Colonic mucosa (tissue), 4 donors: ENCODE measurements at regions of chr6 and their contacts with region 1.

Region 1: DNA sequence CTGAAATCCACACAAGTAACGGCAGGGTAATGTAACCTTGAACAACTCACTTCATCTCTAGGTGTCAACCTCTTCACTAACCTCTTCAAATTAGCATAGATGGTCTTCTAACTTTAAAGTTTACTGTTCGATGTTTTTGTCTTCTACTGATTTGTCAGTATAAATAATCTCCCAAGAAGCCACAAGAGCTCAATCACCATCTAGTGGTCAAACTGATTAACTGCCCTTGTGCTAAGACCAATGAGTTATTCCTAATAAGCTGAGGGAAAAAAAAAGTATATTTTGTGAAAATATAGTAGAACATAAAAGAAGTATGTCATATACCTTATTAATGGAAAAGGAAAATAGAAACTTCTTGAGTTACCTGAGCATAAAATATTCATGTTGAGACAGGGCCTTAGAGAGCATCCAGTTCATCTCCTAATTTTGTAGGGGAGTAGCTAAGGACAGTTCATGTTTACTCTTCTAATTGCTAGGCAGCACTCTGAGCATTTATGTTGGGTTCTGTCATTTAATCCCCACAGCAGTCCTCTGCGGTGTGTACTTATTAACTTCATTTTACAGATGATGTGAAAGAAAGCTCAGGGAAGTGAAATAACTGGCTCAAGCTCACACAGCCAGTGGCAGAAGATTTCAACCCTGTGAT is 317.1 kb downstream of the ESR1 start:
- DNase-seq: no peak
- H3K4me3 ChIP-seq: no peak overlapping the region
- H3K27ac ChIP-seq: no peak overlapping the region
- H3K4me1 ChIP-seq: no peaks in the 10 kb centered on the region
- H3K27me3 ChIP-seq: no peaks in the 10 kb centered on the region
- CTCF ChIP-seq: peak; percentile 55

Region 2: DNA sequence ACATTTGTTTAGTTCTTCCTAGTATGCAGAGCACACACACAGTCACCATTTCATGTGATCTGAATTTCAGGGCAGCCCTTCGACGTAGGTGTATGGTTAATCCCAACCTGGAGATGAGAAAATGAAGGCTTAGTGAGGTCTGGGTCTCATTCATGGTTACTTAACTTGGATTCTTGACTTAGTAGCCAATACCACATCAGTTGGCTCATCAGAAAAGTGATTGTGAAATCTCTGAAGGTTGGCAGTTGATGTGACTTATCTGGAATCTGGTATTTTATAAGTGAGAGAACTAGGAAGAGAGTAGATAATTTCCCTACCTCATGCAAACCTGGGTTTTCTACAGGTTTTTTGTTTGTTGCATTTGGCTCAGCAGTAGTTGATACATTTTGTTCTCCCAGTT is 507.0 kb before region 1 on chr6:
- intact Hi-C with region 1: no loop called
- DNase-seq: no peak
- H3K4me3 ChIP-seq: no peak overlapping the region
- H3K27ac ChIP-seq: no peak overlapping the region
- H3K4me1 ChIP-seq: no peaks in the 10 kb centered on the region
- H3K27me3 ChIP-seq: no peaks in the 10 kb centered on the region
- CTCF ChIP-seq: no peak

Region 3: DNA sequence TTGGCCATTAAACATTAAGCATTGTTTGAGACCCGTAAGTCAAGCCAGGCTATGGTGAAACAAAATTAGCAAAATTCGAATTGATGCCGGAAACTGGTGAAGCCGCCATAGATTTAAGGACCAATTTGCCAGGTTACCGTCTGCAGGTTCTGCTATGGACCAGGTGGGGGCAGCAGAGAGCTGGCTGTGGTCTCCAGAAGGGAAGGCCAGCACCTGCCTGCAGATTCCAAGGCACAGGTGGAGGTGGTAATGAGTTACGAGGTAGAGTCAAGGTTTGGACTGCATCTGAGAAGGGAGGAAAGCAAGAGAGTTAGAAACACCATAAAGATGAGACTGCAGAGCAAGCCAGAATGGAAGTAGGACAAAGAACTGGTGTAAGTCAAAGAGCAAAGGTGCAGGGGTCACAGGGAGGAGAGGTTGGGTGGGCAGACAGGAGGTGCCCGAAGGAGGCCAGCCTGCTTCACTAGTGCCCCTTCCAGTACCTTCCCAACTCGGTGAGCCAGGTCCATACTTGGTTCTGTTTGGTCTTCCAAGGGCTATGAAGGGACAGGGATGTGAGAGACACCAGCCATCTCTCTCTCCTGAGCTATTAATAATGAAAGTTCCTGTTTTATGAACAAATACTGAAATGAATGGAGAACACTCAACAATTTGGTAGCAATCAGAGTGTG is 448.7 kb before region 1 on chr6:
- intact Hi-C with region 1: loop called (anchors 10 kb)
- DNase-seq: peak; percentile 39
- H3K4me3 ChIP-seq: no peak overlapping the region
- H3K27ac ChIP-seq: no peak overlapping the region
- H3K4me1 ChIP-seq: no peaks in the 10 kb centered on the region
- H3K27me3 ChIP-seq: no peaks in the 10 kb centered on the region
- CTCF ChIP-seq: peak; percentile 88

Region 4: DNA sequence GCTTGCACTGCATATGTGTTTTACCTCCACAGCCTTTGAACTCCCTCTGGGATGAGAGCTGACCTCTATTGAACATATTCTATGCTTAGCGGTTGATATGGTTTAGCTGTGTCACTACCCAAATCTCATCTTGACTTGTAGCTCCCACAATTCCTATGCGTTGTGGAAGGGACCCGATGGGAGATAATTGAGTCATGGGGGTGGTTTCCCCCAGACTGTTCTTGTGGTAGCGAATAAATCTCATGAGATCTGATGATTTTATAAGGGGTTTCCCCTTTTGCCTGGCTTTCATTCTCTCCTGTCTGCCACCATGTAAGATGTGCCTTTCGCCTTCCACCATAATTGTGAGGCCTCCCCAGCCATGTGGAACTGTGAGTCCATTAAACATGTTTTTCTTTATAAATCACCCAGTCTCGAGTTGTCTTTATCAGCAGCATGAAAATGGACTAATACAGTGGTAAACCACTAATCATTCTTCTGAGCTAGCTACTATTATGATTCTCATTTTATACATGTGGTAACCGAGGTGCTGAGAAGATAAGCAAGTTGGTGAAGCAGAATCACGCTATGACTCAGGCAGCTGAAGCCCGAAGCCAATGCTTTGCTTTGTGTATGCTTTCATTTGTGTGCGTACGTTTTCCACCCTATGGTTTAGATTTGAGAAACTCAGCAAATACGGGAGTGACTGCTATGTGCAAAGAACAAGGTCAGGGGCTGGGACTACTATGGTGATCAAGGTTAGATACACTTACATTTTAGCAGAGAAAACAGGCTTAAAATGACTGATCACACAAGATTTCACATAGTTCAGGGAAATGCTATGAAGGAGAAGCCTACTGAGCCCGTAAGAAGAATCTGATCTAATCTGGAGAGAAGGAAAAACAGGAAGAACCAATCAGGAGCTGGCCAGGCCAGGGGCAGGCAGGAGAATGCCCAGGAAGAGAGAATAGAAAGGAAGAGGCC is 46.4 kb after region 1 on chr6:
- intact Hi-C with region 1: no loop called
- DNase-seq: no peak
- H3K4me3 ChIP-seq: no peak overlapping the region
- H3K27ac ChIP-seq: no peak overlapping the region
- H3K4me1 ChIP-seq: no peaks in the 10 kb centered on the region
- H3K27me3 ChIP-seq: no peaks in the 10 kb centered on the region
- CTCF ChIP-seq: no peak

Region 5: DNA sequence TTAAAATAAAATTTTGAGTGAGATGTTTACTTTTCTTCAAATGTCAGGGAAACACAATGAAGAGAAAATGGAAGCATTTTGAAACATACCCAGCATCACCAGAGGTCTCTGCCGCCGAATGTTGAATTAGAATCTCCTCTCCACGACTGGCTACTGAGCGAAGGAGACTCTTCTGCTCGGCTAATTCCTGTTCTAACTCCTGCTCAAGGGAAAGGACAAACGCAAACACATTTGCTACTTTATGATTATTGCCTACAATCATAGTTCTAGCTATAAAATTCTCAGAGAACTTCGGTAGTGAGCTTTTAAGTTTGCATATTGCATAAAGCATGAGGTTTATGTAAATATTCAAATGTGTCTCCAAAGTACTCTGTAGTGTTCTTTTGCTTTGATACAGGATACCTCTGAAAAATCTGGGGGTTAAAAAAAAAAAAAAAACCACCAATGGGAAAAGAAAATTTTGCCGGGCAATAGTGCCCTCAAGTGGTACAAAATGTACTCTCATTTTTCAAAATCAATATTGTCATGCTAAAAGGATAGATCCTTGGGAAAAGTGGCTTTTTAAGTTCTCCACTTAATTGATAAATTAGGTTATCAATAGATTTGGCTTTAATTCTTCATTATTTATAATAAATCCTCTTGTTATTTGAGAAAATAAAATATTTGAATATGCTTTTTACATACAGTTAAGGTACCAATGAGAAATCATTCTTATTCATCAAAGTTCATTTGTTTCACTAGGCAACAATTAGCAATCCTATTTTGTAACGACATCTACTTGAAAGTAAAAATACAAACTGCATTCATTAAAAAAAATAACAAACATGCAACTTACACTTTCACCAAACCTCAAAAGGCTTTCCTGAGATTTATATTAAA is 143.7 kb after region 1 on chr6:
- intact Hi-C with region 1: no loop called
- DNase-seq: no peak
- H3K4me3 ChIP-seq: no peak overlapping the region
- H3K27ac ChIP-seq: no peak overlapping the region
- H3K4me1 ChIP-seq: peaks cover 4% of the 10 kb centered on the region
- H3K27me3 ChIP-seq: no peaks in the 10 kb centered on the region
- CTCF ChIP-seq: peak; percentile 46

Region 6: GRCh38 chr6:152661776-152662175 is 537.2 kb after region 1 on chr6:
- intact Hi-C with region 1: no loop called
- DNase-seq: no peak
- H3K4me3 ChIP-seq: no peak overlapping the region
- H3K27ac ChIP-seq: no peak overlapping the region
- H3K4me1 ChIP-seq: no peaks in the 10 kb centered on the region
- H3K27me3 ChIP-seq: no peaks in the 10 kb centered on the region
- CTCF ChIP-seq: no peak